Spleen (tissue), 13 donors: ENCODE measurements at regions of chr4 and their contacts with region 1.

Region 1: GRCh38 chr4:67451464-67451863 is 93.8 kb downstream of the CENPC start:
- DNase-seq: no peak
- H3K4me3 ChIP-seq: no peak overlapping the region
- H3K27ac ChIP-seq: no peak overlapping the region
- H3K4me1 ChIP-seq: no peaks in the 10 kb centered on the region
- H3K27me3 ChIP-seq: no peaks in the 10 kb centered on the region
- CTCF ChIP-seq: no peak
- POLR2A ChIP-seq: no peak

Region 2: GRCh38 chr4:67437974-67438713 is 13.3 kb before region 1 on chr4:
- intact Hi-C with region 1: loop called (anchors 2 kb)
- DNase-seq: no peak
- H3K4me3 ChIP-seq: no peak overlapping the region
- H3K27ac ChIP-seq: no peak overlapping the region
- H3K4me1 ChIP-seq: no peaks in the 10 kb centered on the region
- H3K27me3 ChIP-seq: no peaks in the 10 kb centered on the region
- CTCF ChIP-seq: no peak
- POLR2A ChIP-seq: no peak